BJ (cell line): ENCODE measurements at regions of chr9 and their contacts with region 1.

Region 1: DNA sequence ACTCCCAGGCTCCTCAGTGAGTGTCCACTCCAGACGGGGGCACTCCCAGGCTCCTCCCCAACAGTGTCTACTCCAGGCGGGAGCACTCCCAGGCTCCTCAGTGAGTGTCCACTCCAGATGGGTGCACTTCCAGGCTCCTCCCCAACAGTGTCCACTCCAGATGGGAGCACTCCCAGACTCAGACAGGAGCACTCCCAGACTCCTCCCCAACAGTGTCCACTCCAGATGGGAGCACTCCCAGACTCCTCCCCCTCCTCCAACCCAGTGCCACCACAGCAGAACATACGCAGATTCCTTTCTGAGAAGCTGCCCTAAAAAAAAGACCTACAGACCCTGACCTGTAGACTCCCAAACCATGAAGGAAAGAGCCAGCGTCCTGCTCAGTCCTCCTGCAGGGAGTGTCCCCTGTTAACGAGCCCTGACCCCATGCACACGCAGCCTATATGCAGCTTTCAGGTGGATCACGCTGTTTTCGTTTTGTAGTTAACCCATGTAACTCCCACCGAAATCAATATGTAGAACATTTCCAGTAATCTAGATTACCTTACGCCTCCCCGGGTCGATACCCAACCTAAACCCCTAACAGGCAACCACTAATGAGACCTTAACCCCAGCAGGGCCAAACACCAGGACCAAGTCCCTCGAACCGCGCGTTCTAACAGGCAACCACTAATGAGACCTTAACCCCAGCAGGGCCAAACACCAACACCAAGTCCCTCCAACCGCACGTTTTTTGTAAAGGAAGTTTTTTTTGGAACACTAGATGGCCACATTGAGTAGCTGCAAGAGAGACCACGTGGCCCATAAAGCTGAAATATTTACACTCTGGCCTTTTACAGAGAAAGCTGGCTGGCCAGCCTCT is 15.7 kb downstream of the PNPLA7 start:
- DNase-seq: no peak
- H3K4me3 ChIP-seq: no peak overlapping the region
- H3K27me3 ChIP-seq: no peaks in the 10 kb centered on the region
- CTCF ChIP-seq: peak; percentile 82

Region 2: GRCh38 chr9:137199411-137200121 is 334.9 kb before region 1 on chr9:
- CTCF ChIA-PET with region 1: no interaction called
- POLR2A ChIA-PET with region 1: no interaction called
- DNase-seq: no peak
- H3K4me3 ChIP-seq: peak overlapping the region; percentile 52
- H3K27me3 ChIP-seq: no peaks in the 10 kb centered on the region
- CTCF ChIP-seq: no peak

Region 3: GRCh38 chr9:137545123-137545522 is 10.6 kb after region 1 on chr9:
- CTCF ChIA-PET with region 1: interaction called, 13 read pairs
- POLR2A ChIA-PET with region 1: no interaction called
- DNase-seq: no peak
- H3K4me3 ChIP-seq: no peak overlapping the region
- H3K27me3 ChIP-seq: no peaks in the 10 kb centered on the region
- CTCF ChIP-seq: no peak